ENCODE measurements at regions of chr13 and their contacts with region 1.

Region 1: DNA sequence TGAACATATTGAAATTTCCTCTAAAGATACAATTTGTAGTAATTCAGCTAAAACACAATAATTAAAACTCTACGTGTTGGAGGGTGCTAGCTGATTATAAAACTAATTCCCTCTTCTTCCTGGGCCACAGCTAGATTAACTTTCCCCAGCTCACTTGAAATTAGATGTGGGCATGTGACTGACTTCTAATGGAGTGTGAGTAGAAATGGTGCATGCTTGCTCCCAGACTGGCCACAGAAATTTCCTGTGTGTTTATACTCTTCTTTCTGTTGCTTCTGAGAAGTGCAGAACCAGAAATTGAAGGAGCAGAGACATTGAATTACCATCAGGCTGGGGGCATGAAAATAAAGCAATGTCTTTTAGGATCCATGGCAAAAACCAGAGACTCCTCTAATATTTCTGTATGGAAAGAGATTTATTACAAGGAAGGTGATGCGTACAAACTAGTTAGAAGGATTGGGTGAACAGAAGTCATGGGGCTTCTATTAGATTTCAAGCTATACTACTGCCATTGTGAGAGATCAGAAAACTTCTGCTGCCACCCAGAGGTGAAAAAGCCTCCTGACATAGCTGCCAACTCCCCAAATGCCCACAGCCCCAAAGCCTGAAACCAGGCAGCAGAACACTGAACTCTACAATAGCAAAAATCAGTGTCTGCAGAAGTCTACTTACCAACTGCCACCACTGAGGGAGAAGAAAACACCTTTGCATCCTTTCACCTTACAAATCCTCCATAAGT is 379.2 kb upstream of the MIR17HG start:
- DNase-seq: peak; percentile 38
- H3K4me3 ChIP-seq: no peak overlapping the region; a peak in 1 of 4 replicates
- H3K27ac ChIP-seq: no peak overlapping the region
- H3K4me1 ChIP-seq: no peaks in the 10 kb centered on the region
- H3K27me3 ChIP-seq: no peaks in the 10 kb centered on the region
- CTCF ChIP-seq: peak; percentile 46
- EP300 ChIP-seq: no peak
- RAD21 ChIP-seq: peak; percentile 83

Region 2: DNA sequence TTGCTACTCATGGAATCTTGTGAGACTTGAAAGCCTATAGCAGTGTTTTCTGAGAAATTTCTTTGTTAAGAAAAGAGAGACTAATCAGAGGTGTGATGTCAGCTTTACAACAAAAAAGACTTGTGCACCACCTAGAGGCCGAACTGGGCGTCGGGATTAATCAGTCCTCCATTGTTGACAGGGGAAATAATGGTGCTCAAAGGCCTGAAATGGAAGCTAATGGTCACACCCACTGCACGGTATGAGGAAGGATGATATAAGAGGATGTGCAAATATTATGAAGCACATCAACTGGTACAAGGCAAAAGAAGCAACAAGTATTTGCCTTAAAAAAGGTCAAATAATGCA is 101.0 kb before region 1 on chr13:
- CTCF ChIA-PET with region 1: interaction called, 34 read pairs
- POLR2A ChIA-PET with region 1: no interaction called
- DNase-seq: peak; percentile 37
- H3K4me3 ChIP-seq: peak overlapping the region in 1 of 2 experiments; percentile 42; a peak in 1 of 4 replicates
- H3K27ac ChIP-seq: no peak overlapping the region
- H3K4me1 ChIP-seq: no peaks in the 10 kb centered on the region
- H3K27me3 ChIP-seq: no peaks in the 10 kb centered on the region
- CTCF ChIP-seq: peak; percentile 84
- EP300 ChIP-seq: no peak
- RAD21 ChIP-seq: peak; percentile 92

Region 3: GRCh38 chr13:90872491-90873025 is 95.8 kb before region 1 on chr13:
- CTCF ChIA-PET with region 1: interaction called, 34 read pairs
- POLR2A ChIA-PET with region 1: no interaction called
- DNase-seq: no peak
- H3K4me3 ChIP-seq: no peak overlapping the region
- H3K27ac ChIP-seq: no peak overlapping the region
- H3K4me1 ChIP-seq: peaks cover 0 to 2% of the 10 kb centered on the region in 2 experiments; a peak in 2 of 4 replicates
- H3K27me3 ChIP-seq: no peaks in the 10 kb centered on the region
- CTCF ChIP-seq: no peak
- EP300 ChIP-seq: no peak
- RAD21 ChIP-seq: no peak

Region 4: DNA sequence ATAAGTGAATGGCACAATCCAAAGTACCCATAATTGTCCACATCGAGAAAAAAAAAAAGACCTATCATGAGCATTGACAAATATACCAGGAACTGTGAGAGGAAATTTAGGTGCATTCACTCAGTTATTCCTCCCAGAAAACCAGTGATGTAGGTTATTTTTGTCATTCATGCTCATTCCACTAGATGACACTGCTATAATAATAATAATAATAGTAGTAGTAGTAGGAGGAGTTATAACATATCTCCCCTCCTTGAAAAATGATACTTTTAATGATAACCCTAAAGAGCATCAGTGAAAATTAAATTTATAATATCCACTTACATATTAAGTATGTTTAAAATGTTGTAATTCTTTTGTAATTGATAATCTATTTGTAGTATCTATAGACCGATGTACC is 84.7 kb before region 1 on chr13:
- CTCF ChIA-PET with region 1: interaction called, 13 read pairs
- POLR2A ChIA-PET with region 1: no interaction called
- DNase-seq: no peak
- H3K4me3 ChIP-seq: no peak overlapping the region
- H3K27ac ChIP-seq: no peak overlapping the region
- H3K4me1 ChIP-seq: no peaks in the 10 kb centered on the region
- H3K27me3 ChIP-seq: no peaks in the 10 kb centered on the region
- CTCF ChIP-seq: peak; percentile 35
- EP300 ChIP-seq: no peak
- RAD21 ChIP-seq: peak; percentile 18; the same call in 1 of the 2 replicates

Region 5: DNA sequence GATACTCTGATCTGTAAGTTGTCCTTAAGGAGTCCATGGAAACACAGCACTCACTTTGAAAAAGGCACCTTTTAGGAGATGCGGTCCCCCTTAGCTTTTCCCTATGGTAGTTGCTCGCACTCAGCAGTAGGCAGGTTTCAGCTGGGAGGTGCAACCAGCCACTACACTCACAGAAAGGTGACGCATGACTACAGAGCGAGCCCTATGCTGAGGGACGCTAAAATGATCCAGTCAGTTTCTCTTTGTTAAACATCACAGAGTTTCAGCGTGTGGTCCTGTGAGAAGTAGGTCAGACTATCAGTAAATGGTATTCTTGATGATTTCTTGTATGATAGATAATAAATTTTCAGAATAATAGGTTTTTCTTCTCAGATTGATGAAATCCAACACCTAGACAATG is 16.4 kb after region 1 on chr13:
- CTCF ChIA-PET with region 1: no interaction called
- POLR2A ChIA-PET with region 1: no interaction called
- DNase-seq: no peak
- H3K4me3 ChIP-seq: no peak overlapping the region
- H3K27ac ChIP-seq: no peak overlapping the region
- H3K4me1 ChIP-seq: no peaks in the 10 kb centered on the region
- H3K27me3 ChIP-seq: no peaks in the 10 kb centered on the region
- CTCF ChIP-seq: no peak
- EP300 ChIP-seq: no peak
- RAD21 ChIP-seq: no peak

Region 6: DNA sequence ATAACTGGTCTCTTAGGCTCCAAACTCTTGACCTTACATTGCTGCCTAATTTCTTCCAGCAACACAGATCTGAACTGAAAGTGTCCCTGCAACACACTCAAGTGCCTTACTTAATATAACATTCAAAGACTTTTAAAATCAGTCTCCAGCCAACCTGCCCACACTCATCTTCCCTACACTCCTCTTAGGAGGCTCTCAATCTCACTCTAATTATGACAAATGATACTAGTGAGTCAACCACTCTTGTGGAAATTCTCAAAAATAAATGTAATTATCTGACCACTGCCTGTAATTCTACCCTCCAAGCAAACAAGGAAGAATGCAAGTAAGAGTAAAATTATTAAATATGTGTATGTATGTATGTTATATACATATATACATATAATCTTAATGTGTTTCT is 31.1 kb after region 1 on chr13:
- CTCF ChIA-PET with region 1: no interaction called
- POLR2A ChIA-PET with region 1: no interaction called
- DNase-seq: no peak
- H3K4me3 ChIP-seq: no peak overlapping the region
- H3K27ac ChIP-seq: no peak overlapping the region
- H3K4me1 ChIP-seq: no peaks in the 10 kb centered on the region
- H3K27me3 ChIP-seq: no peaks in the 10 kb centered on the region
- CTCF ChIP-seq: no peak
- EP300 ChIP-seq: no peak
- RAD21 ChIP-seq: no peak

Measured in SK-N-SH (cell line).